ENCODE measurements at regions of chr1 and their contacts with region 1.

Region 1: DNA sequence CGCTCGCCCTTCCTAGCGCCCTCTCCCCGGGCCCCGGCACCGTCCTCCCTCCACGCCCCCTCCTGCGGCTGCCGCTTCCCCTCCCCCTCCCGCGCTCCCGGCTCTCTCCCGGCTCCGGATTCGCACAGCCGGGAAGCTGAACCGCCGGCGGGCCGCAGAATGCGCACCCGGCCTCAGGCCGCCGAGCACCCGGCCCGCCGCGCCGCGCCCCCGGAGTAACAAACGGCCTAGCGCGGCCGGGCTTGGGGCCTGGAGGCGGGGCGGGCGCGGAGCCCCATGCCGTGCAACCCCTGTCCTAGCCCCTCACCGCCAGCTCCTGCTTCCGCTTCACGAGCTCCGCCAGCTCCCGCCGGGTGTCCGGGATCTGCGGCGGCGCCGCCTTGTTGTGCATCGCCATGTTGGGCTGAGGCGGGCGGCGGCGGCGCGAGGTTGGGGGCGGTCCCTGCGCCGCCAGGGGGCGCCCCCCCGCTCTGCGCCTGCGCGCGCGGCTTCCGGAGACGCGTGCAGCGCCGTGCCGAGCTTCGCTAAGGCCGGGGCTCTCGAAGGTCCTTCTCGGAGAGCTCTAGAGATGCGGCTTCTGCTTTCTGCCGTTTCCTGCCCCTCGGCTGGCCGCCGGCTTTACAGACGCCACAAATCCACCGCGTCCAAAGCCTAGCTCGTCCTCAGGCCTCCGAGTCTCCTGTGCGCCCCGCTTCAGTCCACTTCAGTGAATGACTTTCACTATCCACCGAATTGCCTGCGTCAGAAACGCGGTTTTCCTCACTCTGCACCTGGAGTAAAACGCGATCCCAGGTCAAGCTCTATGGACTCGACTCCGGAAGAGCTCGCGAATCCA is at the start of gene MEAF6:
- DNase-seq: peak; percentile 87
- H3K4me3 Mint-ChIP-seq: peak within 1 kb of the TSS; percentile 94
- H3K27ac Mint-ChIP-seq: peak within 1 kb of the TSS; percentile 83
- H3K4me1 Mint-ChIP-seq: peaks cover 38% of the 10 kb centered on the region
- H3K27me3 Mint-ChIP-seq: no peaks in the 10 kb centered on the region
- total RNA-seq, gene MEAF6: 63.7 to 64.2 TPM

Region 2: GRCh38 chr1:37474046-37474759 is 40.4 kb before region 1 on chr1 and contains the start of gene ZC3H12A:
- CTCF ChIA-PET with region 1: interaction called, 22 read pairs
- POLR2A ChIA-PET with region 1: interaction called, 45 read pairs
- DNase-seq: peak; percentile 93
- H3K4me3 Mint-ChIP-seq: peak within 1 kb of the TSS; percentile 98
- H3K27ac Mint-ChIP-seq: peak within 1 kb of the TSS; percentile 99
- H3K4me1 Mint-ChIP-seq: peaks cover 53% of the 10 kb centered on the region
- H3K27me3 Mint-ChIP-seq: no peaks in the 10 kb centered on the region
- total RNA-seq, gene ZC3H12A: 29.9 to 31.1 TPM

Region 3: GRCh38 chr1:37498872-37499617 is 15.5 kb before region 1 on chr1:
- CTCF ChIA-PET with region 1: interaction called, 27 read pairs
- POLR2A ChIA-PET with region 1: interaction called, 14 read pairs
- DNase-seq: no peak
- H3K4me3 Mint-ChIP-seq: no peak overlapping the region
- H3K27ac Mint-ChIP-seq: no peak overlapping the region
- H3K4me1 Mint-ChIP-seq: peaks cover 4% of the 10 kb centered on the region
- H3K27me3 Mint-ChIP-seq: no peaks in the 10 kb centered on the region

Region 4: GRCh38 chr1:37553927-37554808 is 39.6 kb after region 1 on chr1 and contains the start of gene SNIP1:
- CTCF ChIA-PET with region 1: interaction called, 15 read pairs
- POLR2A ChIA-PET with region 1: interaction called, 21 read pairs
- DNase-seq: peak; percentile 94
- H3K4me3 Mint-ChIP-seq: peak within 1 kb of the TSS; percentile 90
- H3K27ac Mint-ChIP-seq: peak within 1 kb of the TSS; percentile 92
- H3K4me1 Mint-ChIP-seq: peaks cover 57% of the 10 kb centered on the region
- H3K27me3 Mint-ChIP-seq: no peaks in the 10 kb centered on the region
- total RNA-seq, gene SNIP1: 24.2 to 25.9 TPM

Region 5: GRCh38 chr1:37634244-37634991 is 119.9 kb after region 1 on chr1 and contains the start of gene RSPO1:
- CTCF ChIA-PET with region 1: no interaction called
- POLR2A ChIA-PET with region 1: no interaction called
- DNase-seq: no peak
- H3K4me3 Mint-ChIP-seq: no peak within 1 kb of the TSS
- H3K27ac Mint-ChIP-seq: no peak within 1 kb of the TSS
- H3K4me1 Mint-ChIP-seq: peaks cover 5% of the 10 kb centered on the region
- H3K27me3 Mint-ChIP-seq: peaks cover 79% of the 10 kb centered on the region
- total RNA-seq, gene RSPO1: not detected

Measured in activated CD4-positive, alpha-beta memory T cell treated with anti-CD3 and anti-CD28 coated beads, Interleukin-2, amount 10 ng/mL, durations not matched to agents 7 days and 5 days (primary cell).